CD14-positive monocyte (primary cell): ENCODE measurements at regions of chr20 and their contacts with region 1.

Region 1: GRCh38 chr20:36861875-36862801 is 13.8 kb upstream of the TLDC2 start:
- DNase-seq: peak in 1 of 3 donors; percentile 66
- H3K4me3 ChIP-seq: peak overlapping the region in 2 of 3 experiments; percentile 39 to 71
- H3K4me3 Mint-ChIP-seq: peak overlapping the region; percentile 76 to 85
- H3K27ac ChIP-seq: peak overlapping the region in 1 of 2 donors; percentile 17
- H3K27ac Mint-ChIP-seq: peak overlapping the region in 5 of 7 donors; percentile 4 to 72 (median 59)
- H3K4me1 ChIP-seq: peaks cover 44 to 56% of the 10 kb centered on the region in 2 donors
- H3K4me1 Mint-ChIP-seq: peaks cover 67% of the 10 kb centered on the region
- H3K27me3 ChIP-seq: peaks cover 0 to 17% of the 10 kb centered on the region in 2 donors
- H3K27me3 Mint-ChIP-seq: peaks cover 17 to 30% (median 24%) of the 10 kb centered on the region in 3 donors
- CTCF ChIP-seq: no peak

Region 2: GRCh38 chr20:35856866-35857265 is 1005.3 kb before region 1 on chr20:
- intact Hi-C with region 1: no loop called
- DNase-seq: no peak
- H3K4me3 ChIP-seq: no peak overlapping the region
- H3K4me3 Mint-ChIP-seq: no peak overlapping the region
- H3K27ac ChIP-seq: no peak overlapping the region
- H3K27ac Mint-ChIP-seq: no peak overlapping the region
- H3K4me1 ChIP-seq: peaks cover 4% of the 10 kb centered on the region in 2 donors
- H3K4me1 Mint-ChIP-seq: peaks cover 4% of the 10 kb centered on the region
- H3K27me3 ChIP-seq: no peaks in the 10 kb centered on the region
- H3K27me3 Mint-ChIP-seq: peaks cover 0 to 1% (median 0%) of the 10 kb centered on the region in 3 donors
- CTCF ChIP-seq: no peak

Region 3: DNA sequence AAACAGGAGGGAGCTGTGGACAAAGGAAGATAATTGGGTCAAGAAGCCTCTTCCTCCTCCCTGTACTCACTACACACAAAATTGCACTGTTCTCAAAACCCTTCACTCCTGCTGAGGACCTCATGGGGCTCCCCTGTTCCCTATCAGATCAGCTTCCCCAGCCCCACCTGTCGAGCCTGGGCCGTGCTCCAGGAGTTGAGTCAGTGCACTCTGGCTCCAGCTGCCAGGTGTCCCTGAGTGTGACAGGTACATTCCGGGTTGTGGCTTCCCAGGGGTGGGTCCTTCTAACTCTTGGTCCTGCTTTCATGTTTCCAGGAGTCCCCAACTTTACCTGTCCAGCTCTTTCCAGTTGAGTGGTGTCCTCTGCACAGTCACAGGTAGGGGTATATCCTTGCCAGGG is 248.2 kb before region 1 on chr20:
- intact Hi-C with region 1: loop called in 1 of 2 experiments (anchors 10 kb)
- DNase-seq: no peak
- H3K4me3 ChIP-seq: no peak overlapping the region
- H3K4me3 Mint-ChIP-seq: no peak overlapping the region
- H3K27ac ChIP-seq: peak overlapping the region in 1 of 2 donors; percentile 65
- H3K27ac Mint-ChIP-seq: peak overlapping the region in 3 of 7 donors; percentile 27 to 59 (median 57)
- H3K4me1 ChIP-seq: no peaks in the 10 kb centered on the region
- H3K4me1 Mint-ChIP-seq: peaks cover 3% of the 10 kb centered on the region
- H3K27me3 ChIP-seq: no peaks in the 10 kb centered on the region
- H3K27me3 Mint-ChIP-seq: peaks cover 0 to 3% (median 0%) of the 10 kb centered on the region in 3 donors
- CTCF ChIP-seq: no peak

Region 4: GRCh38 chr20:36773597-36774390 is 88.3 kb before region 1 on chr20 and contains the start of gene DSN1:
- intact Hi-C with region 1: loop called in 1 of 2 experiments (anchors 10 kb)
- DNase-seq: peak; percentile 98
- H3K4me3 ChIP-seq: peak within 1 kb of the TSS; percentile 88 to 94 (median 92)
- H3K4me3 Mint-ChIP-seq: peak within 1 kb of the TSS; percentile 95
- H3K27ac ChIP-seq: peak within 1 kb of the TSS; percentile 93 to 97
- H3K27ac Mint-ChIP-seq: peak within 1 kb of the TSS; percentile 94 to 99 (median 97)
- H3K4me1 ChIP-seq: peaks cover 20 to 33% of the 10 kb centered on the region in 2 donors
- H3K4me1 Mint-ChIP-seq: peaks cover 30% of the 10 kb centered on the region
- H3K27me3 ChIP-seq: no peaks in the 10 kb centered on the region
- H3K27me3 Mint-ChIP-seq: peaks cover 0 to 2% (median 0%) of the 10 kb centered on the region in 3 donors
- CTCF ChIP-seq: peak; percentile 81
- polyA plus RNA-seq, gene DSN1: 4.9 to 5.2 (median 5.1) TPM

Region 5: GRCh38 chr20:36784900-36785299 is 77.2 kb before region 1 on chr20:
- intact Hi-C with region 1: no loop called
- DNase-seq: no peak
- H3K4me3 ChIP-seq: no peak overlapping the region
- H3K4me3 Mint-ChIP-seq: no peak overlapping the region
- H3K27ac ChIP-seq: no peak overlapping the region
- H3K27ac Mint-ChIP-seq: no peak overlapping the region
- H3K4me1 ChIP-seq: no peaks in the 10 kb centered on the region
- H3K4me1 Mint-ChIP-seq: no peaks in the 10 kb centered on the region
- H3K27me3 ChIP-seq: no peaks in the 10 kb centered on the region
- H3K27me3 Mint-ChIP-seq: peaks cover 1 to 2% (median 2%) of the 10 kb centered on the region in 3 donors
- CTCF ChIP-seq: no peak

Region 6: GRCh38 chr20:36808317-36809257 is 53.6 kb before region 1 on chr20:
- intact Hi-C with region 1: loop called (anchors 5 kb)
- DNase-seq: peak; percentile 98 to 100 (median 99)
- H3K4me3 ChIP-seq: no peak overlapping the region
- H3K4me3 Mint-ChIP-seq: no peak overlapping the region
- H3K27ac ChIP-seq: peak overlapping the region; percentile 78 to 87
- H3K27ac Mint-ChIP-seq: peak overlapping the region; percentile 92 to 98 (median 96)
- H3K4me1 ChIP-seq: peaks cover 13 to 17% of the 10 kb centered on the region in 2 donors
- H3K4me1 Mint-ChIP-seq: peaks cover 10% of the 10 kb centered on the region
- H3K27me3 ChIP-seq: no peaks in the 10 kb centered on the region
- H3K27me3 Mint-ChIP-seq: peaks cover 0 to 2% (median 0%) of the 10 kb centered on the region in 3 donors
- CTCF ChIP-seq: peak; percentile 99

Region 7: DNA sequence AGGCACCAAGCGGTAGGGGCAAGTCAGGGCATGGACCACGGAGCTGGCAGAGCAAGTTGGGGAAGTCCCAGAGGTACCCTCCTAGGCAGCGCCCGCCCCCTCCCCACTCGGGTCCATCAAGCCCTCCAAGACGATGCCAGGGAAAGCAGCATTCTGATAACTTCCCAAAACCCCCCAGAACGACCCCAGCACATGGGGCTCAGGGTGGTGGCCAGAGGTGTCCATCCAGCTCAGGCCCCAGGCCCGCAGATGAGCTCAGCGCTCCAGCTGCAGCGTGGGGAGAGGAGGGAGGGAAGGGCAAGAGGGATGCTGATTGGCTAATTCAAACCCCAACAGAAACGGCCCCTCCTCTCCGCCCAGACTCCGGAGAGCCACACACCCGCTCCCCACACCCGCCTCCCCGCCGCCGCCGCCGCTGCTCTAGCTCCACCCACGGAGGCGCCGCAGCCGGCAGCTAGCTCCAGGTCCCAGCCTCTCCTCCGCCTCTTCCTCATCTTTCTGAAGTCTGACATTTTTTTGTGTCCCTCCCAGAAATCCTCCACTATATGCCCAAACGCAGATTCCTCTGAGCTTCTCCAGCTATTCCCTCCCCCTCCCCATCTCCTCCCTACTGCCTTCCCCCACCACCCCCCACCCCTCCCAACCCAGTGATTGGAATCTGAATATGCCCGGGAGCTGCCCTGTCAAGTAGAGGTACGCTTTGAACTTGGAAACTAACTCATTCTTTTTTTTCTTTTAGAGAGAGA is 26.5 kb before region 1 on chr20:
- intact Hi-C with region 1: loop called in 1 of 2 experiments (anchors 2 kb)
- DNase-seq: peak; percentile 92 to 93 (median 92)
- H3K4me3 ChIP-seq: peak overlapping the region in 2 of 3 experiments; percentile 24 to 71
- H3K4me3 Mint-ChIP-seq: peak overlapping the region; percentile 71 to 82
- H3K27ac ChIP-seq: peak overlapping the region; percentile 65 to 79
- H3K27ac Mint-ChIP-seq: peak overlapping the region; percentile 85 to 95 (median 93)
- H3K4me1 ChIP-seq: peaks cover 21 to 25% of the 10 kb centered on the region in 2 donors
- H3K4me1 Mint-ChIP-seq: peaks cover 22% of the 10 kb centered on the region
- H3K27me3 ChIP-seq: no peaks in the 10 kb centered on the region
- H3K27me3 Mint-ChIP-seq: peaks cover 0 to 4% (median 2%) of the 10 kb centered on the region in 3 donors
- CTCF ChIP-seq: no peak